Cardiac septum (tissue), 1 donor: ENCODE measurements at regions of chr10 and their contacts with region 1.

Region 1: GRCh38 chr10:73810735-73811465 is 498 bp downstream of the NDST2 start:
- DNase-seq: no peak

Region 2: GRCh38 chr10:73785221-73785720 is 25.6 kb before region 1 on chr10 and contains the start of gene ZSWIM8:
- intact Hi-C with region 1: loop called (anchors 1 kb)
- DNase-seq: peak; percentile 94
- total RNA-seq, gene ZSWIM8: 57.1 TPM

Region 3: DNA sequence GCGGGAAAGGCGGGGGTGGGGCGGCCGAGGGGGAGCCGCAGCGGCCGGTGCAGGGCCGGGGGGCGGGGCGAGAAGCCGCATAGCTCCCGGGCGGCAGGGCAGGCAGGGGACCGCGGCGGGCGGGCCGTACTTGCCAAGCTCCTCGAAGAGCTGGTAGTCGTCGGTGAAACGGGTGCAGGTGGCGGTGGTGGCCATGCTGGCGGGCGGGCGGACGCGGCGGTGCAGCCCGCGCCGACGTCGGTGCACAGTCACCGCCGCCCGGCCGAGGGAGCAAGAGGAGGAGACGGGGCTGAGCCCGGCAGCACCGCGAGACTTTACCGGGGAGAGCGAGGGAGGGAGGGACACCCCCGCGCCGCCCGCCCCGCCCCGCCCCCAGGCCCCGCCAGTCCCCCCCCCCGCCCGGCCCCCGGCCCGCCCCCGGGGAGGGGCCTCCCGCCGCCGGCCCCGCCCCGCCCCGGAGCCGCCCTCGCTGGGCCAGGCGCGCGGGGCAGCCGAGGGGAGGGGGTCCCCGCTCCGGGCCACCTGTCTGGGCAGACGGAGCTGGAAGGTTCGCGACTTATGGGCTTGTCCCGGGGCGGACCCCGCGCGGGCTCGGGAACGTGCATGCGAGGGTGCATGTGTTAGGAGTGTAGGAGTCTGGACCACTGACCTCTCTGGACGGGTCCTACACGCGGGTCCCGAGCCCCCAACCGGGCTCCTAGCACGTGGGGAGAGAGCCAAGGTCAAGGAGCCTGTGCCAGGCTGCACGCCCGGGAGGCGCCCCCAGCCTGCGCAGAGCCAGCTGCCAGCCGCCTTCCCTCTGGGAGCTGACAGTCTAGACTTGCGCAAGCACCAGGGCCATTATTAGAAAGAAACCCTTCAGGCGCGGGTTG is 63.6 kb after region 1 on chr10 and contains the start of gene CAMK2G:
- intact Hi-C with region 1: loop called (anchors 5 kb)
- DNase-seq: peak; percentile 94
- total RNA-seq, gene CAMK2G: 12.7 TPM

Region 4: GRCh38 chr10:73956476-73957359 is 145.8 kb after region 1 on chr10:
- intact Hi-C with region 1: no loop called
- DNase-seq: no peak